ENCODE measurements at regions of chr1 and their contacts with region 1.

Region 1: GRCh38 chr1:171110621-171111326 is 20.1 kb downstream of the FMO3 start:
- DNase-seq: no peak
- ATAC-seq: no peak
- H3K4me3 ChIP-seq: no peak overlapping the region
- H3K27ac ChIP-seq: peak overlapping the region; percentile 28
- H3K4me1 ChIP-seq: no peaks in the 10 kb centered on the region
- H3K27me3 ChIP-seq: peaks cover 0 to 1% (median 0%) of the 10 kb centered on the region in 3 donors
- CTCF ChIP-seq: no peak

Region 2: GRCh38 chr1:171127501-171127900 is 16.7 kb after region 1 on chr1:
- intact Hi-C with region 1: loop called in 1 of 2 experiments (anchors 2 kb)
- DNase-seq: no peak
- ATAC-seq: no peak
- H3K4me3 ChIP-seq: no peak overlapping the region
- H3K27ac ChIP-seq: no peak overlapping the region
- H3K4me1 ChIP-seq: no peaks in the 10 kb centered on the region
- H3K27me3 ChIP-seq: no peaks in the 10 kb centered on the region
- CTCF ChIP-seq: no peak